ENCODE measurements at regions of chr5 and their contacts with region 1.

Region 1: GRCh38 chr5:39080597-39081204 is 6.5 kb upstream of the RICTOR start:
- DNase-seq: no peak
- ATAC-seq: peak; percentile 60
- H3K4me3 ChIP-seq: no peak overlapping the region
- H3K27ac ChIP-seq: no peak overlapping the region
- H3K4me1 ChIP-seq: peaks cover 4% of the 10 kb centered on the region; the same call in 1 of the 2 replicates
- H3K27me3 ChIP-seq: no peaks in the 10 kb centered on the region
- CTCF ChIP-seq: peak; percentile 79 to 80 (median 80)
- EP300 ChIP-seq: no peak
- POLR2A ChIP-seq: no peak
- RAD21 ChIP-seq: peak; percentile 74

Region 2: DNA sequence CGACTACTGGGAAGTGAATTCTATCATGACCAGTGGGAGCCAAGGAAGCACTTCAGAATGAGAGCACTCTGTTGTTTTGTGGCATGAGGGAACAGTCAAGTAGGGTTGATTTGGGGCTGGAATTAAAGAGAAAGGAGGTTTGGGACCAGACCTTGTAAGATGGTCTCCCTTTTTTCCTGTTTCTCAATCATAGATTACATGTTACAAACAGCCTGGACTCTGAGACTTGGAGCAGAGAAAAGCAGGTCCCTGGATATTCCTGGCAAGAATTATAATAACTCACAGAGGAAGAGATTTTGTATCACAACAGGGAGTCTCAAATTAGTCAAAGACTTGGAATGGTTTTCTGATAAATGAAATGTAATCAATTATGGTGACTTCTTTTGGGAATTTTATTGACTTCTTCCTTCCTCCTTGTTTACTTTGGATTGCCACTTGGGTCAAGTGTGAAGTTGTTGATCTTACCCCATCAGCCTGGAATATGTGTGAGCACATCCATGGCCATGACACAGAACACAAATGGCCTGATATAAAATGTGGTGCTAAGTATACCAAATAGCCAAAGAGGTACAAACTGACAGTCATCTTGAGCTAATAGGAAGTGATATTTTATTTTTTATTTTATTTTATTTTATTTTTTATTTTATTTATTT is 365.9 kb before region 1 on chr5:
- CTCF ChIA-PET with region 1: no interaction called
- POLR2A ChIA-PET with region 1: no interaction called
- RAD21 ChIA-PET with region 1: no interaction called
- SMC1A ChIA-PET with region 1: no interaction called
- in situ Hi-C with region 1: no loop called
- intact Hi-C with region 1: no loop called
- DNase-seq: no peak
- ATAC-seq: no peak
- H3K4me3 ChIP-seq: no peak overlapping the region
- H3K27ac ChIP-seq: no peak overlapping the region
- H3K4me1 ChIP-seq: no peaks in the 10 kb centered on the region
- H3K27me3 ChIP-seq: no peaks in the 10 kb centered on the region
- CTCF ChIP-seq: no peak
- EP300 ChIP-seq: no peak
- POLR2A ChIP-seq: no peak
- RAD21 ChIP-seq: no peak

Region 3: GRCh38 chr5:38831909-38832308 is 248.8 kb before region 1 on chr5:
- CTCF ChIA-PET with region 1: interaction called, 16 read pairs
- POLR2A ChIA-PET with region 1: no interaction called
- RAD21 ChIA-PET with region 1: no interaction called
- SMC1A ChIA-PET with region 1: interaction called, 5 read pairs
- in situ Hi-C with region 1: no loop called
- intact Hi-C with region 1: loop called (anchors 5 kb)
- DNase-seq: no peak
- ATAC-seq: peak; percentile 52
- H3K4me3 ChIP-seq: no peak overlapping the region
- H3K27ac ChIP-seq: no peak overlapping the region
- H3K4me1 ChIP-seq: no peaks in the 10 kb centered on the region
- H3K27me3 ChIP-seq: no peaks in the 10 kb centered on the region
- CTCF ChIP-seq: peak; percentile 38 to 46 (median 42); a peak in 4 of 6 replicates
- EP300 ChIP-seq: no peak
- POLR2A ChIP-seq: no peak
- RAD21 ChIP-seq: no peak

Region 4: GRCh38 chr5:38961691-38962090 is 119.0 kb before region 1 on chr5:
- CTCF ChIA-PET with region 1: interaction called, 32 read pairs
- POLR2A ChIA-PET with region 1: no interaction called
- RAD21 ChIA-PET with region 1: interaction called, 8 read pairs
- SMC1A ChIA-PET with region 1: interaction called, 8 read pairs
- in situ Hi-C with region 1: no loop called
- intact Hi-C with region 1: no loop called
- DNase-seq: no peak
- ATAC-seq: no peak
- H3K4me3 ChIP-seq: no peak overlapping the region
- H3K27ac ChIP-seq: no peak overlapping the region
- H3K4me1 ChIP-seq: no peaks in the 10 kb centered on the region
- H3K27me3 ChIP-seq: no peaks in the 10 kb centered on the region
- CTCF ChIP-seq: no peak
- EP300 ChIP-seq: no peak
- POLR2A ChIP-seq: no peak
- RAD21 ChIP-seq: no peak

Region 5: DNA sequence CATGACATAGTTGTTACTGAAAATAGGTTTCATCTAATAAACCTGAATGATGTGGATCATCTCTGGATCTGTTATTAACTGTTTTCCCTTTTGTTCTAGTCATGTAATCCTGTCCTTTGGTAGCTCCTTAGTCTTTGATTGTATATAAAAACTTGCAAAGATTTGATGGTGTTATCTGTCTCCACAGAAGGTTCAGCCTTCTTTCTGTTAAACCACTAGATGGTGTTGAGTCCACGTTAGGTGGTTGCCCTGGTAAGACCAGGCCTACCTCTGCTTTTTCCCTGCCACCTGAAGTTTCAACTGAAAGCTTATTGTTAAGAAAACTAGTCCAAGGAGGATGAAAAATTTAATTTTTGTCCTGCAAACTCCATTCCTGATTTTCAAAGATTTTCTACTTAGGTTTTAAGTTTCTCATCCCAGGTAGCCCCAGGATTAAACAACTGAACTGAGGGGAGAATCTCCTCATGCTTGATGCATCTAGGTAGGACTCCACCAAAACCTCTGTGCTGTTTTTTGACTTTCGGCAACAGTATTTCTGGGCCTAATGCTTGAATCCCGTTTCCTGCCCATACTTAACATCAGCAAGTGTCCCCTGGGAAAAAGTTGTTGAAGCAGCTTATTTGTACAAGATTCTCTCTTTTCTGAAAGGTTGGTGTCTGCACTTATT is 75.0 kb before region 1 on chr5:
- CTCF ChIA-PET with region 1: interaction called, 110 read pairs
- POLR2A ChIA-PET with region 1: no interaction called
- RAD21 ChIA-PET with region 1: interaction called, 32 read pairs
- SMC1A ChIA-PET with region 1: interaction called, 68 read pairs
- in situ Hi-C with region 1: no loop called
- intact Hi-C with region 1: loop called (anchors 1 kb)
- DNase-seq: no peak
- ATAC-seq: peak; percentile 76
- H3K4me3 ChIP-seq: no peak overlapping the region
- H3K27ac ChIP-seq: no peak overlapping the region
- H3K4me1 ChIP-seq: no peaks in the 10 kb centered on the region
- H3K27me3 ChIP-seq: no peaks in the 10 kb centered on the region
- CTCF ChIP-seq: peak; percentile 34 to 45 (median 40); a peak in 3 of 6 replicates
- EP300 ChIP-seq: no peak
- POLR2A ChIP-seq: no peak
- RAD21 ChIP-seq: peak; percentile 40; the same call in 1 of the 2 replicates

Region 6: GRCh38 chr5:39091940-39092580 is 11.4 kb after region 1 on chr5:
- CTCF ChIA-PET with region 1: interaction called, 19 read pairs
- POLR2A ChIA-PET with region 1: no interaction called
- RAD21 ChIA-PET with region 1: interaction called, 3 read pairs
- SMC1A ChIA-PET with region 1: no interaction called
- in situ Hi-C with region 1: no loop called
- intact Hi-C with region 1: no loop called
- DNase-seq: no peak
- ATAC-seq: no peak
- H3K4me3 ChIP-seq: no peak overlapping the region
- H3K27ac ChIP-seq: no peak overlapping the region
- H3K4me1 ChIP-seq: no peaks in the 10 kb centered on the region
- H3K27me3 ChIP-seq: no peaks in the 10 kb centered on the region
- CTCF ChIP-seq: no peak
- EP300 ChIP-seq: no peak
- POLR2A ChIP-seq: no peak
- RAD21 ChIP-seq: no peak

Region 7: GRCh38 chr5:39119404-39120051 is 38.8 kb after region 1 on chr5:
- CTCF ChIA-PET with region 1: interaction called, 10 read pairs
- POLR2A ChIA-PET with region 1: no interaction called
- RAD21 ChIA-PET with region 1: no interaction called
- SMC1A ChIA-PET with region 1: interaction called, 7 read pairs
- in situ Hi-C with region 1: no loop called
- intact Hi-C with region 1: no loop called
- DNase-seq: no peak
- ATAC-seq: no peak
- H3K4me3 ChIP-seq: no peak overlapping the region
- H3K27ac ChIP-seq: no peak overlapping the region
- H3K4me1 ChIP-seq: no peaks in the 10 kb centered on the region
- H3K27me3 ChIP-seq: no peaks in the 10 kb centered on the region
- CTCF ChIP-seq: no peak
- EP300 ChIP-seq: no peak
- POLR2A ChIP-seq: no peak
- RAD21 ChIP-seq: no peak

Region 8: DNA sequence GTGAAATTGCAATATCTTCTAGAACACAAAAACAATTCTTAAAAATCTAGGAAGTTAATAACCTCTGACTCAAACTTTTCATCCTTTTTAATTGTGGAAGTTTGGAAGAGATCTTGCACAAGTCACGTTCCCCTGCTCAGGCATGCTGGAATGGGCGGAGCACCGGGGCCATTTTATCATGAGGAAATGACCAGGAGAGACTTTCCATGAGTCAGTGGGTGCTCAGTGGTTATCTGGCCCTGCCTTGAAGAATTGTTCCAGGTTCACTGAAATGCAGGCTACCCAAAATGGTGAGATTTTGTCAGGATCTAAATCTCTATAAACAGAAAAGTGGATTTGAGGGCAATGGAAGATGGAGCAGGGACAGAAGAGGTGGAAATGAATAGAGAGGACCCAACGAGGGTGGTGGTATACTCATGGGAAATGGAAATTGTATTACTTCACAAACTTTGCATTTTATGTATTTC is 77.5 kb after region 1 on chr5:
- CTCF ChIA-PET with region 1: no interaction called
- POLR2A ChIA-PET with region 1: no interaction called
- RAD21 ChIA-PET with region 1: no interaction called
- SMC1A ChIA-PET with region 1: no interaction called
- in situ Hi-C with region 1: no loop called
- intact Hi-C with region 1: no loop called
- DNase-seq: no peak
- ATAC-seq: no peak
- H3K4me3 ChIP-seq: no peak overlapping the region
- H3K27ac ChIP-seq: no peak overlapping the region
- H3K4me1 ChIP-seq: no peaks in the 10 kb centered on the region
- H3K27me3 ChIP-seq: no peaks in the 10 kb centered on the region
- CTCF ChIP-seq: no peak
- EP300 ChIP-seq: no peak
- POLR2A ChIP-seq: no peak
- RAD21 ChIP-seq: no peak

Measured in GM12878 (cell line).